Activated CD4-positive, alpha-beta T cell treated with anti-CD3 and anti-CD28 coated beads for 36 hours (primary cell): ENCODE measurements at regions of chr15 and their contacts with region 1.

Region 1: GRCh38 chr15:34900748-34901147 is 68.8 kb downstream of the AQR start:
- DNase-seq: no peak
- ATAC-seq: no peak
- H3K4me3 Mint-ChIP-seq: no peak overlapping the region
- H3K27ac Mint-ChIP-seq: no peak overlapping the region
- H3K4me1 Mint-ChIP-seq: no peaks in the 10 kb centered on the region
- H3K27me3 Mint-ChIP-seq: no peaks in the 10 kb centered on the region

Region 2: DNA sequence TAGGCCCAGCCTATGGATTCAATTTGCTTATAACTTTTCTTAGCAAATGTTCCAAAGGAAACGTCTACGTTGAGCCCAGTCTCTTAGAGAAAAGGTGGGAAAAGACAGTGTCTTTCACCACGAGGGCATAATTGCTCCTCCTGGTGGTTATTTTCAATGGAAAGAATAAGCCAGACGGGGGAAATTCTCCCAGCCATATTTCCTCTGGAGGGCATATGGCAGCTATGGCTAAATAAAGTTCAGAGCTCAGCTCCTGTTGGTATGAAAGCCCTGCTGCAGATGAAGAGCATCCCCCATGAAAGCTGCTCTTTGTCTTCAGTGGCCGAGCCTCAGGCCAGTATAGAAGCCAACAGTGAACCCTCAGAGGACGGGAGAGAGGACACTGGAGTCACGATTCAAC is 1292.0 kb before region 1 on chr15:
- CTCF ChIA-PET with region 1: no interaction called
- POLR2A ChIA-PET with region 1: interaction called, 10 read pairs
- intact Hi-C with region 1: no loop called
- DNase-seq: no peak
- ATAC-seq: no peak
- H3K4me3 Mint-ChIP-seq: no peak overlapping the region
- H3K27ac Mint-ChIP-seq: no peak overlapping the region
- H3K4me1 Mint-ChIP-seq: no peaks in the 10 kb centered on the region
- H3K27me3 Mint-ChIP-seq: peaks cover 11% of the 10 kb centered on the region